ENCODE measurements at regions of chrX and their contacts with region 1.

Region 1: DNA sequence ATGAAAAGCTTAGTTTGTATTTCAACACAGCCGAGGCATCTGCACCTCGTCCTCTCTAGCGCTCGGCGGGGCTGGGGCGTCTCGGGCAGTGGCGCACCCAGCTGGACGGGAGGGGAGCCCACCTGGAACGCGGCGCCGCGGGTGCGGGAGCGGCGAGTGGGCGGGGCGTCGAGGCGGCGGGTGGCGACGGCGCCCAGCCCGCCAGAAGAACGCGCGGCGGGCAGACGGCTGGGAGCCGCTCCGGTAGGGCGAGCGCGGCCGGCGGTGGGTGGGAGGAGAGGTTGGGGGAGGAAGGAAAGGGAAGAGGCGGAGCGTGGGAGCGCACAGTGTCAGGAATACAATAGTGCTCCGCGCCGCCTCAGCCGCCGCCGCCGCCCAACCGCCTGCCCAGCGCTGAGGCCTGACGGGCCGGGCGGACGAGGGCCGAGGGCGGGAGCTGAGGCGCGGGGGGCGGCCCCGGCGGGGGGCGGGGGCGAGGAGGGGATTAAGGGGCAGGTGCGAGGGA is at the start of gene JADE3:
- DNase-seq: peak; percentile 82 to 90
- ATAC-seq: peak; percentile 87
- H3K4me3 ChIP-seq: peak within 1 kb of the TSS; percentile 57 to 94
- H3K27ac ChIP-seq: peak within 1 kb of the TSS in 1 of 2 donors; percentile 61
- H3K4me1 ChIP-seq: no peaks in the 10 kb centered on the region
- H3K27me3 ChIP-seq: no peaks in the 10 kb centered on the region
- total RNA-seq, gene JADE3: 5.8 to 6.1 TPM

Region 2: DNA sequence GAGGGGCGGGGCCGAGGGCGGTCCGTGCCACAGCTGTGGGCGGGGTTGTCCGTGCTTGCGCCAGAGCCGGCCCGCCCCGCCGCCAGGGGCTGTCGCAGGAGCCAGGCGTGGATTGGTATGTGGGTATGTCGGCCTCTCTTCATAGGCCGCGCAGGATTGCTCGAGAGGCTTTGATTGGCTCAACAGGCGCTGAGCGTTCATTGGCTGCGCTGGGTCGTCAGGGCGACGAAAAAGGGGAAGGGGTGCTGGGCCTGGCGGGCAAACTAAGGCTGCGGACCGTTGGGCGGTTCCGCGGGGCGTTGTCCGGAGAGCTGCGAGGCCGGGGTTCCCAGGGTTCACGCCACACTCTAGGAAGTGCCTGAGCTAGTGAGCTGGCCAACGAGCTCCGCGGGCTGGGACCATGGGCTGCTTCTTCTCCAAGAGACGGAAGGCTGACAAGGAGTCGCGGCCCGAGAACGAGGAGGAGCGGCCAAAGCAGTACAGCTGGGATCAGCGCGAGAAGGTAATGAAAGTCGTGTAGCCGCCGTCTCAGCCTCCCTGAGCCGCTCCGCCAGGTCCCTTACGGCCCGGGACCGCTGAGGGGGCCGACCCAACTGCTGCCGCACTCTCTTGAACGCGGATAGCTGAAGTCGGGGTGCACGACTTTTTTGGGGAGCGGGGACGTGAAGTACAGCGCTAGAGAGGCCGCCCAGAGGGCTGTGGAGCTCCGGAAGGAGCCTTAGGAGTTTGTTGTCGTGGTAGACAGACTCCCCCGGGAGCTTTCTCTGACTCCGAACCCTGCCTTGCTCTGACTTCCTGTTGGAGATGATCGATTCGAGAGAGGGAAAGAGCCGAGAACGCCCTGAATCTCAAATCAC is 75.2 kb before region 1 on chrX and contains the start of gene RP2:
- intact Hi-C with region 1: loop called in 1 of 2 experiments (anchors 5 kb)
- DNase-seq: peak; percentile 94 to 95
- ATAC-seq: peak; percentile 95
- H3K4me3 ChIP-seq: peak within 1 kb of the TSS; percentile 39 to 51
- H3K27ac ChIP-seq: peak within 1 kb of the TSS in 1 of 2 donors; percentile 92
- H3K4me1 ChIP-seq: no peaks in the 10 kb centered on the region
- H3K27me3 ChIP-seq: no peaks in the 10 kb centered on the region
- total RNA-seq, gene RP2: 9.3 to 11.0 TPM

Region 3: DNA sequence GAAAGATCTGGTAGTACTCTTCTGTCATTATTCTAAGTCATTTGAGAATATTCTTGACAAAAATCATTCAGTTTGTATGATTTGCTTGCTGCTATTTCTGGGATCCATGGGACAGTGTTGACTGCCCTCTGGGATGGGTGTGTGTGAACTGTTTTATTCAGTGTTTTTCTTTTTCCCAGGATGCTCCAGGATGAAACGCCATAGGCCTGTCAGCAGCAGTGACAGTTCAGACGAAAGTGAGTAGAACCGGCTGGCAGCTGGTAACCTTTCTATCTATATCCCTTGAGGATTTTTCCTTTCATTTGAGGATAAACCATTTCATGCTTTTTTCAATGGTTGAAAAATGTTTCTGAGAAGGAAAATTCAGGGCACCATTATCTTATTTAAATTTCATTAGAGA is 72.6 kb after region 1 on chrX:
- intact Hi-C with region 1: loop called in 1 of 2 experiments (anchors 5 kb)
- DNase-seq: no peak
- ATAC-seq: no peak
- H3K4me3 ChIP-seq: no peak overlapping the region
- H3K27ac ChIP-seq: no peak overlapping the region
- H3K4me1 ChIP-seq: no peaks in the 10 kb centered on the region
- H3K27me3 ChIP-seq: no peaks in the 10 kb centered on the region

Region 4: GRCh38 chrX:47078129-47079043 is 166.2 kb after region 1 on chrX and contains the start of gene RGN:
- intact Hi-C with region 1: loop called in 1 of 2 experiments (anchors 5 kb)
- DNase-seq: peak in 1 of 2 donors; percentile 48
- ATAC-seq: peak; percentile 69
- H3K4me3 ChIP-seq: peak within 1 kb of the TSS; percentile 48 to 79
- H3K27ac ChIP-seq: peak within 1 kb of the TSS in 1 of 2 donors; percentile 71
- H3K4me1 ChIP-seq: no peaks in the 10 kb centered on the region
- H3K27me3 ChIP-seq: no peaks in the 10 kb centered on the region
- total RNA-seq, gene RGN: 10.3 to 20.2 TPM